ENCODE measurements at regions of chr7 and their contacts with region 1.

Region 1: DNA sequence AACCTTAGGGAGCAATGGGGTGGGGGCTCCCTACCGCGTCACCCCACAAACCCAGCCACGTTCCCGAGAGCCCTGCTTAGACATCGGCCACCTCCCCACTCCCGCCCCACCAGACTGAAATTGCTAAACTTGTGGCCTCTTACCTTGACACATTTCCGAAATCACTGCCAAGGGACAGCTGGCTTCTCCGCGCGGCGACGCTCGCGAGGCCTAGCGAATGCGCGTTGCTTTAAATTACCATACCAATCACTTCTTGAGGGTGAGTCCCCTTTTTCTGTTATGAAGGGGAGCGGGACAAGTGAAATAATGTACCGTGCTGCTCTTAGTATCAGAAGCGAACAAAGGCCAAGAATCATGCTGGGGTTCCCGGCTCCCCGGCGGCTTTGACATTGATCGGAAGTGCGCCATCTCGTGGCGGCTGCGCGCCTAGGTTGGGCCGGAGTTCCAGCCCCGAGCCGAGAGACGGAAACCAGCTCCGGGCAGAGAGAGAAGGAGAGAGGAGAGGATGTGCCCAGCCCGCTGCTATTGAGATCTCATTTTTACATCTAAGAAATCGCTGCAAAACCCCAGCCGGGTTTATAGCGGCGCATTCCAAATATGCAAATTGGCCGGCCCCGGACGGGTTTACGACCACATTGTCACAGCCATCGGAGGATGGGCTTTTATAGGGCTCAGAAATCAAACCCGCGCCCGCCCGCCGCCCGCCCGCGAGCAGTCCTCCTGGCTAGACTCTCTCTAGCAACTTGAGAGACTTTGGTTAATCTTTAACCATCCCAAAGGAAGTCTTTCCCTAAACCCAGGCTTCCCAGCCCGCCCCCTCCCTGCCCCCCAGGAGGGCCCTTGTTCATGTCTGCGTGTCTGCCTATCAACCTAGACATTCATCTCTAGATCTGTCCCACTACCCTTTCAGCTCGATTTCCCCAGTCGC is 5.3 kb downstream of the HOXA11 start:
- DNase-seq: peak; percentile 70 to 84
- H3K4me3 ChIP-seq: peak overlapping the region; percentile 47
- H3K4me3 Mint-ChIP-seq: peak overlapping the region; percentile 74
- H3K27ac Mint-ChIP-seq: peak overlapping the region; percentile 31
- H3K4me1 ChIP-seq: peaks cover 12% of the 10 kb centered on the region
- H3K4me1 Mint-ChIP-seq: peaks cover 3% of the 10 kb centered on the region
- H3K27me3 ChIP-seq: peaks cover 2% of the 10 kb centered on the region; the same call in 1 of the 2 replicates
- H3K27me3 Mint-ChIP-seq: peaks cover 2% of the 10 kb centered on the region
- CTCF ChIP-seq: peak; percentile 92 to 93

Region 2: DNA sequence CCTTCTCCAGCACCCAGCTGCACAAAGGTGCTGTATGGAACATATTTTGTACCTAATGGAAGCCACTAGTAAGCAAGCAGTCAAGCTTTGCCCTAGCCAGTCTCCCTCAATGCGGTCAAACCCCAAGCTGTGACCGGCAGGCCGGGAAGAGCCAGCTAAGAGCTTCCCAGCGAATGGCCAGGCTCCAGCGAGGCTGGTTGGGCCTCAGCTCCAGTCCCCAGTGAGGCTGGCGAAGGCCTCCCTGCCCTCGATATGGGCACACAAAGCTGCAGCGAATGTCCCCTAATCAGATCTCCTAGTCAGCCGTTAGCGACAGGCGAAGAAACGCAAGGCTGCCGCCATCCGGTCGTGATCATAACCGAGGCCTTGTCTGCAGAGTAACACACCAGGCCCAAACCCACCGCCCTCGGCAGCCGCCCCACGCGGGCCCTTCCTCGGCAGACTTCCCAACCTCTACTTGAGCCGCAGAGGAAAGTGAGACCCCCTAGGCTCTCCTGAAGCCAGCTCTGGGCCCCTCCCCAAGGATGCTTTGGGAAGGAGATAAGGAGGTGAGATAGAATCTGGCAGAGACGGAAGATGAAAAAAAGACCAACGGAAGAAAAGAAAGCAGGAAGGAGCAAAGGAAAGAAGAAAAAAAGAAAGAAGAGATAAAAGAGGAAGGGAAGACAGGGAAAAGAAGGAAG is 11.4 kb before region 1 on chr7:
- CTCF ChIA-PET with region 1: interaction called, 12 read pairs
- POLR2A ChIA-PET with region 1: no interaction called
- intact Hi-C with region 1: no loop called
- DNase-seq: no peak
- H3K4me3 ChIP-seq: no peak overlapping the region
- H3K4me3 Mint-ChIP-seq: peak overlapping the region; percentile 90
- H3K27ac Mint-ChIP-seq: no peak overlapping the region
- H3K4me1 ChIP-seq: peaks cover 9% of the 10 kb centered on the region; the same call in 1 of the 2 replicates
- H3K4me1 Mint-ChIP-seq: peaks cover 17% of the 10 kb centered on the region
- H3K27me3 ChIP-seq: no peaks in the 10 kb centered on the region
- H3K27me3 Mint-ChIP-seq: no peaks in the 10 kb centered on the region
- CTCF ChIP-seq: no peak

Region 3: DNA sequence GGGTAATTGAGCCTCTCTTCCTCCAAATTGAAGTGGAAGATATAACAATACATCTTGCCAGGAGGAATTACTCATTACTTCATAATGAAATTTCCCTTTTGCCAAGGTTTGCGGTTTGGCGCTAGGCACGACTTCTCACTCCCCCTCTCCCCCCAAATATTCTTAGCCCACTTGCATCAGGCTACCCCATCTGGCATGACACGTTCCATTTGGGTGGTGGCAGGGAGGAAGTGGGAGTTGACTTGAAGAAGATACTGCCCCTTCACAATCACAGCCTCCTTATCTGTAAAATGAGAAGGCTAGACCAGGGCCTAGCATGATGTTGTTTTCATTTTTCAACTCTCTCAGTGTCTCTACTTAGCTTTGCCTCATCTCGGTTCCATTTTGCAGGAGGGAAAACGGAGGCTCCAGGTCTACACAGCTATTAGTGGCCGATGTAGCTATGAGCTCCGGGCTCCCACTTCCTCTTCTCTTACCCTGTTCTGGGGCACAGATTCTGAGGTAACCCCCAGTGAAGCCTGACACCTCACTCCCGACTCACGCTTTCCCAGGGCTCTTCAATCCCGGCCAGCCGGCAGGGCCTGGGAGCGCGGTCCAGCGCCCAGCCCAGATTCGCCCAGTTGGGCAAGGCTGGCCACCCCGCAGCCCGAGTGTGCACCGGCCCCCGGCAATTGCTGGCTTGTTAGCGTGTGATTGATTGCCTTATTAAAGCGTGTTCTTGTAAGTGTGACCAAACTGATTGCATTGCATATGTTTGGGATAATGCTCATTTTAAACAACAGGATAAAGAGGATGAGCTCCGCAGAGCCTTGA is 69.3 kb after region 1 on chr7:
- CTCF ChIA-PET with region 1: no interaction called
- POLR2A ChIA-PET with region 1: no interaction called
- intact Hi-C with region 1: no loop called
- DNase-seq: no peak
- H3K4me3 ChIP-seq: no peak overlapping the region
- H3K4me3 Mint-ChIP-seq: no peak overlapping the region
- H3K27ac Mint-ChIP-seq: no peak overlapping the region
- H3K4me1 ChIP-seq: no peaks in the 10 kb centered on the region
- H3K4me1 Mint-ChIP-seq: no peaks in the 10 kb centered on the region
- H3K27me3 ChIP-seq: no peaks in the 10 kb centered on the region
- H3K27me3 Mint-ChIP-seq: no peaks in the 10 kb centered on the region
- CTCF ChIP-seq: no peak